ENCODE measurements at regions of chr2 and their contacts with region 1.

Region 1: GRCh38 chr2:54522624-54523281 is 66.6 kb downstream of the SPTBN1 start:
- DNase-seq: peak; percentile 71
- CTCF ChIP-seq: peak; percentile 78

Region 2: GRCh38 chr2:54657664-54658083 is 134.9 kb after region 1 on chr2:
- in situ Hi-C with region 1: loop called (anchors 5 kb)
- DNase-seq: peak; percentile 55
- CTCF ChIP-seq: peak; percentile 39

Region 3: GRCh38 chr2:54704688-54705605 is 182.2 kb after region 1 on chr2:
- in situ Hi-C with region 1: loop called (anchors 10 kb)
- DNase-seq: peak; percentile 60
- CTCF ChIP-seq: peak; percentile 21

Measured in GM13976 (cell line).